ENCODE measurements at regions of chr13 and their contacts with region 1.

Region 1: DNA sequence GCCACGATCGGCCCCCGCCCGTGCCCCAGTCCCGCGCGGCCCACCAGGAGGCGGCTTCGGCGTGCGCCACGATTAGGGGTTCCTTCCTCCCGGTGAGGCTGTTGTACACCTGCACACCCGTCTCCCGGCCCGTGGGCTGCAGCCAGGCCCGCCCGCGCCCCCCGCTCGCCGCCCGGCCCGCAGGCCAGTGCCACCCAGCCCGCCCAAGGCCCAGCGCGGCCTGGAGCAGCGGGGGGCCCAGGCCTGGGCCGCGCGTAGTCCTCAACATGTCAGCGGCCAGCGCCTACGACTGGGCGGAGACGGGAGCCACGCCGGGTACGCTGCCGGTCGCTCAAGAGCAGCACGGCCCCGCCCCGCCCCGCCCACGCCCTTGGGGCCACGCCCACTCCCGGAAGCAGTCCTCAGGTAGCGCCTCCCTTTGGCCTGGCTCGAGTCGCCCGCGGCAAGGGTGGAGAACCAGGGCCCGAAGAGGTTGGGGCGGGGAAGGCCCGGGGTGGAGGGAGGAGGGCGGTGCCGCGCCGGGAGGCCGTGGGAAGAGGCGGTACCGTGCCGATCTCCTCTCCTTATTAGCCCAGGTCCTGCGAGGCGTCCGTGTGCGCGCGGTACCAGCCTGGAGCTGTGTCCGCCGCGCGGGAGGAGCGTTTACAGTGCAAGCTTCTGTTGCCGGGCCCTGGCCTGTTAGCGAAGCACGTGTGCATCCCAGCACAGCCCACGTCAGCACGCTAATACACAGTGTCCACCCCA is at the start of gene CARS2:
- DNase-seq: peak; percentile 87
- H3K4me3 Mint-ChIP-seq: peak within 1 kb of the TSS; percentile 91
- H3K27ac Mint-ChIP-seq: peak within 1 kb of the TSS; percentile 85
- H3K4me1 Mint-ChIP-seq: peaks cover 45% of the 10 kb centered on the region
- H3K27me3 Mint-ChIP-seq: peaks cover 3% of the 10 kb centered on the region
- total RNA-seq, gene CARS2: 106 and 110 TPM in 2 replicates

Region 2: DNA sequence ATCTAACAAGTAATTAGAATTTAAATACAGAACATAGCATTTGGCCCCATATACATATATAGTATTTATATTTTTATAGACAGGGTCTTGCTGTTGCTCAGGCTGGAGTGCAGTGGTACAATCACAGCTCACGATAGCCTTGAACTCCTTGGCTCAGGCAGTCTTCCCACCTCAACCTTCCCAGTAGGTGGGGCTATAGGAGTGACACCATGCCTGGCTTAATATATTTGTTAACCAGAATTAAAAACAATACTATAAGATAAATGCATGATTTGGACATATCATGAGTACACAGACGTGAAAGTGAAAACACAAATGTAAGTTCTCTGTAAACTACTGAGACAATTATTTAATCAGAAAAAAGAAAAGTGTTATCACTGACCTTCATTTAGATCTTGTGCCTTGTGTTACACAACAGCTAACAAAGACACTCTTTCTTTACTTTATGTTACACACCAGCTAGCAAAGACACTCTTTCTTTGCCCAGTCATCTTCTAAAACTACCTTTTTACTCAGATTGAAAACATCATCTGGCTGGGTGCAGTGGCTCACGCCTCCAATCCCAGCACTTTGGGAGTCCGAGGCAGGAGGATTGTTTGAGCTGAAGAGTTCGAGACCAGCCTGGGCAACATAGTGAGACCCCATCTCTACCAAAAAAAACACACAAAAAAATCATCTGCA is 22.7 kb before region 1 on chr13:
- intact Hi-C with region 1: loop called (anchors 2 kb)
- DNase-seq: no peak
- H3K4me3 Mint-ChIP-seq: no peak overlapping the region
- H3K27ac Mint-ChIP-seq: no peak overlapping the region
- H3K4me1 Mint-ChIP-seq: no peaks in the 10 kb centered on the region
- H3K27me3 Mint-ChIP-seq: no peaks in the 10 kb centered on the region

Region 3: DNA sequence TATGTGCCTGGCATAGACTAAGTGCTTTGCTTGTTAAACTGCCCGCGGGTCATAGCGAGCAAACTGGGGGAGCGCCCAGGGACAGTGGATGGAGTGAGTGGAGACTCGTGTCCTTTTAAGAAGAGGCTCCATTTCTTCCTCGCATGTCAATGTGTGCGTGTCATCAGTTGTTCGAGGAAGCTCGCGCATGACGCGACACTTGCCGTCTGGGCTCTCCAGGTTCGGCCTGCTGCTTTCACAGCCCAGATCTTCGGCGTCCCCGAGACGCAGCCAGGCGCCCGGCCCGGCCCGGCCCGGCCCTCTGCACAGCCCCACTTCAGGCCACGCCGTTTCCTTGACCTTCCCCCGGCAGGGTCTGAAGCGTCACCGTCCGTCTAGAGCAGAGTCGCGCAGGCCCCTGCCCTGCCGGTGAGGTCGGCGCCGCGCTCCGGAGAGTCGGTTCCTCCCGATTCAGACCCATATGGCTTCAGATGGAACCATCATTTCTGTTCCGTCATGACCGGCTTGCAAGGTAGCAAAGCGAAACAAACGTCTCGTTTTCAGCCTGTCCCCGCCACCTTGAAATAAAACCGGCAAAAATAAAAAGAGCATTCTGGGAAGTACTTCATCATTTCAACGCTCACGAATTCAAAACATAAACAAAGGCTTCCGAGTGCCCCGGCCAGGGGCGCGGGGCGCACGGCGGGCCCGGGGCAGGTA is 408.5 kb after region 1 on chr13:
- intact Hi-C with region 1: loop called (anchors 1 kb)
- DNase-seq: peak; percentile 5
- H3K4me3 Mint-ChIP-seq: peak overlapping the region; percentile 82
- H3K27ac Mint-ChIP-seq: peak overlapping the region; percentile 40
- H3K4me1 Mint-ChIP-seq: peaks cover 10% of the 10 kb centered on the region
- H3K27me3 Mint-ChIP-seq: peaks cover 84% of the 10 kb centered on the region

Region 4: GRCh38 chr13:111304041-111304544 is 598.1 kb after region 1 on chr13:
- intact Hi-C with region 1: no loop called
- DNase-seq: no peak
- H3K4me3 Mint-ChIP-seq: no peak overlapping the region
- H3K27ac Mint-ChIP-seq: peak overlapping the region; percentile 82
- H3K4me1 Mint-ChIP-seq: peaks cover 20% of the 10 kb centered on the region
- H3K27me3 Mint-ChIP-seq: no peaks in the 10 kb centered on the region